Mammary epithelial cell (primary cell): ENCODE measurements at regions of chr6 and their contacts with region 1.

Region 1: GRCh38 chr6:46419576-46420002 is 71.7 kb downstream of the RCAN2 start:
- DNase-seq: peak; percentile 48
- H3K4me3 ChIP-seq: no peak overlapping the region
- H3K27ac ChIP-seq: no peak overlapping the region
- H3K4me1 ChIP-seq: no peaks in the 10 kb centered on the region
- H3K27me3 ChIP-seq: peaks cover 5% of the 10 kb centered on the region
- CTCF ChIP-seq: peak; percentile 81 to 82

Region 2: GRCh38 chr6:46221222-46221793 is 198.3 kb before region 1 on chr6:
- CTCF ChIA-PET with region 1: no interaction called
- dilution Hi-C with region 1: no loop called
- in situ Hi-C with region 1: loop called in 1 of 2 experiments (anchors 5 kb)
- intact Hi-C with region 1: loop called (anchors 2 kb)
- DNase-seq: peak; percentile 21
- H3K4me3 ChIP-seq: no peak overlapping the region
- H3K27ac ChIP-seq: no peak overlapping the region
- H3K4me1 ChIP-seq: no peaks in the 10 kb centered on the region
- H3K27me3 ChIP-seq: peaks cover 2% of the 10 kb centered on the region
- CTCF ChIP-seq: peak; percentile 83 to 88

Region 3: GRCh38 chr6:46626228-46626909 is 206.8 kb after region 1 on chr6:
- CTCF ChIA-PET with region 1: no interaction called
- dilution Hi-C with region 1: no loop called
- in situ Hi-C with region 1: no loop called
- intact Hi-C with region 1: loop called (anchors 1 kb)
- DNase-seq: peak; percentile 31
- H3K4me3 ChIP-seq: no peak overlapping the region
- H3K27ac ChIP-seq: no peak overlapping the region
- H3K4me1 ChIP-seq: no peaks in the 10 kb centered on the region
- H3K27me3 ChIP-seq: no peaks in the 10 kb centered on the region
- CTCF ChIP-seq: peak; percentile 62 to 66

Region 4: GRCh38 chr6:46781478-46782378 is 362.1 kb after region 1 on chr6:
- CTCF ChIA-PET with region 1: no interaction called
- dilution Hi-C with region 1: no loop called
- in situ Hi-C with region 1: no loop called
- intact Hi-C with region 1: loop called (anchors 1 kb)
- DNase-seq: peak; percentile 57
- H3K4me3 ChIP-seq: no peak overlapping the region
- H3K27ac ChIP-seq: no peak overlapping the region
- H3K4me1 ChIP-seq: no peaks in the 10 kb centered on the region
- H3K27me3 ChIP-seq: no peaks in the 10 kb centered on the region
- CTCF ChIP-seq: peak; percentile 70 to 78

Region 5: GRCh38 chr6:46983007-46983411 is 563.4 kb after region 1 on chr6:
- CTCF ChIA-PET with region 1: no interaction called
- dilution Hi-C with region 1: no loop called
- in situ Hi-C with region 1: loop called (anchors 25 kb)
- intact Hi-C with region 1: no loop called
- DNase-seq: peak; percentile 85
- H3K4me3 ChIP-seq: no peak overlapping the region
- H3K27ac ChIP-seq: peak overlapping the region; percentile 67
- H3K4me1 ChIP-seq: peaks cover 34% of the 10 kb centered on the region
- H3K27me3 ChIP-seq: no peaks in the 10 kb centered on the region
- CTCF ChIP-seq: peak; percentile 9 to 18